Naive thymus-derived CD4-positive, alpha-beta T cell (primary cell): ENCODE measurements at regions of chr1 and their contacts with region 1.

Region 1: GRCh38 chr1:154607609-154608396 is at the start of gene ADAR:
- DNase-seq: peak; percentile 67 to 95 (median 90)
- ATAC-seq: peak; percentile 92
- H3K4me3 ChIP-seq: peak within 1 kb of the TSS; percentile 78
- H3K4me3 Mint-ChIP-seq: peak within 1 kb of the TSS; percentile 91 to 100 (median 98)
- H3K27ac ChIP-seq: peak within 1 kb of the TSS; percentile 97
- H3K27ac Mint-ChIP-seq: peak within 1 kb of the TSS; percentile 94 to 99 (median 99)
- H3K4me1 ChIP-seq: peaks cover 40 to 42% of the 10 kb centered on the region in 2 donors
- H3K4me1 Mint-ChIP-seq: peaks cover 63 to 90% (median 75%) of the 10 kb centered on the region in 7 donors
- H3K27me3 ChIP-seq: no peaks in the 10 kb centered on the region
- H3K27me3 Mint-ChIP-seq: no peaks in the 10 kb centered on the region
- total RNA-seq, gene ADAR: 206 to 408 (median 237) TPM

Region 2: DNA sequence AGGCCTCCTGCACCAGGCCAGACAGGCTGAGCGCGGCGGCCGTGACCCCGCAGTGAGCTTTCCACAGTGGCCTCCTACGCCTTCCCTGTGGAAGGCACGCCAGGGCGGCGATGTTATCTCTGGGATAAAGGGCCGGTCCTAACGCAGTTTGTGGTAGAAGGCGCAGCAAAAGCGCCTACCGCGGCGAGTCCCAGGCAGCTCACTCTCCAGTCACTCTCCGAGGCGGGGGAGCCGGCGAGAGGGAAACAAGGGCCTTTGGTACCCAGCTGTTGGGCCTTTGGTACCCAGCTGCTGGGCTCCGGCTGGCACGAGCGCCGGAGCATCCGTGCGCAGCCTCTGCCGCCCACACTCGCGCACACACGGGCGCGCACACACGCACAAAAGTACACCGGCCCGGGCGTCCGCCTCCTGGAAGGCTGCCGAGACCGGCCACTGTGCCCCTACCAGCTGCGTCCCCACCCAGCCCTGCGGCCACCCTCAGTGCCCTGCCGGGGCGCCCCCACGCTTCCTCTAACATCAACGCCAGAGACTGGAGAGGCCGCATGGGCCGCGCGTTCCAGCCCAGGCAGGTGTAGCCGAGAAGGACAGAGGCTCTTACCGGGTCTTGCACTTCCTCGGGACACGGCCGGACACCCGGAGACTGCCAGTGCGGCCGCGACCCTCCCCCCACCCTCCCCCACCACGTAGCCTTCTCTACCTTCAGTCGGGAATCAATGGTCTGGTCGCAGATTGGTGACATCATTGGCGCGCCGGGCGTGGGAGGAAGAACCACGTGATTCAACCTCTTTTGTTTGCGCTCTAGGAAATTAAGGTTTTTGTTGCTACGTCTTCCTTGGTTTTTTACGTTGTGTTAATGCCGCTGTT is 19.7 kb after region 1 on chr1:
- CTCF ChIA-PET with region 1: interaction called, 6 read pairs
- POLR2A ChIA-PET with region 1: interaction called, 20 read pairs
- intact Hi-C with region 1: loop called (anchors 1 kb)
- DNase-seq: peak; percentile 78 to 92 (median 90)
- ATAC-seq: peak; percentile 81
- H3K4me3 ChIP-seq: peak overlapping the region; percentile 72
- H3K4me3 Mint-ChIP-seq: peak overlapping the region; percentile 85 to 100 (median 94)
- H3K27ac ChIP-seq: peak overlapping the region; percentile 99
- H3K27ac Mint-ChIP-seq: peak overlapping the region; percentile 98 to 100 (median 99)
- H3K4me1 ChIP-seq: peaks cover 15% of the 10 kb centered on the region in 2 donors
- H3K4me1 Mint-ChIP-seq: peaks cover 20 to 54% (median 44%) of the 10 kb centered on the region in 7 donors
- H3K27me3 ChIP-seq: no peaks in the 10 kb centered on the region
- H3K27me3 Mint-ChIP-seq: peaks cover 0 to 20% (median 7%) of the 10 kb centered on the region in 5 donors

Region 3: GRCh38 chr1:154878371-154879022 is 270.7 kb after region 1 on chr1:
- CTCF ChIA-PET with region 1: interaction called, 4 read pairs
- POLR2A ChIA-PET with region 1: no interaction called
- intact Hi-C with region 1: loop called in 1 of 2 experiments (anchors 1 kb)
- DNase-seq: peak; percentile 43 to 73 (median 60)
- ATAC-seq: peak; percentile 94
- H3K4me3 ChIP-seq: no peak overlapping the region
- H3K4me3 Mint-ChIP-seq: no peak overlapping the region
- H3K27ac ChIP-seq: no peak overlapping the region
- H3K27ac Mint-ChIP-seq: peak overlapping the region in 1 of 9 donors; percentile 56
- H3K4me1 ChIP-seq: no peaks in the 10 kb centered on the region
- H3K4me1 Mint-ChIP-seq: peaks cover 0 to 8% (median 0%) of the 10 kb centered on the region in 7 donors
- H3K27me3 ChIP-seq: no peaks in the 10 kb centered on the region
- H3K27me3 Mint-ChIP-seq: peaks cover 0 to 2% (median 0%) of the 10 kb centered on the region in 5 donors

Region 4: GRCh38 chr1:154974063-154974807 is 366.4 kb after region 1 on chr1 and contains the start of gene CKS1B:
- CTCF ChIA-PET with region 1: no interaction called
- POLR2A ChIA-PET with region 1: no interaction called
- intact Hi-C with region 1: loop called in 1 of 2 experiments (anchors 1 kb)
- DNase-seq: peak; percentile 86 to 100 (median 98)
- ATAC-seq: peak; percentile 89
- H3K4me3 ChIP-seq: peak within 1 kb of the TSS; percentile 82
- H3K4me3 Mint-ChIP-seq: no peak within 1 kb of the TSS
- H3K27ac ChIP-seq: peak within 1 kb of the TSS; percentile 94
- H3K27ac Mint-ChIP-seq: no peak within 1 kb of the TSS
- H3K4me1 ChIP-seq: peaks cover 28 to 35% of the 10 kb centered on the region in 2 donors
- H3K4me1 Mint-ChIP-seq: peaks cover 27 to 39% (median 31%) of the 10 kb centered on the region in 7 donors
- H3K27me3 ChIP-seq: no peaks in the 10 kb centered on the region
- H3K27me3 Mint-ChIP-seq: no peaks in the 10 kb centered on the region
- total RNA-seq, gene CKS1B: 8.4 to 105 (median 10.2) TPM

Region 5: GRCh38 chr1:155135415-155136028 is 527.7 kb after region 1 on chr1 and contains the start of gene SLC50A1:
- CTCF ChIA-PET with region 1: no interaction called
- POLR2A ChIA-PET with region 1: no interaction called
- intact Hi-C with region 1: loop called in 1 of 2 experiments (anchors 5 kb)
- DNase-seq: peak; percentile 86 to 96 (median 90)
- ATAC-seq: peak; percentile 93
- H3K4me3 ChIP-seq: peak within 1 kb of the TSS; percentile 99
- H3K4me3 Mint-ChIP-seq: peak within 1 kb of the TSS; percentile 91 to 100 (median 98)
- H3K27ac ChIP-seq: peak within 1 kb of the TSS; percentile 99
- H3K27ac Mint-ChIP-seq: peak within 1 kb of the TSS; percentile 95 to 100 (median 98)
- H3K4me1 ChIP-seq: peaks cover 8 to 15% of the 10 kb centered on the region in 2 donors
- H3K4me1 Mint-ChIP-seq: peaks cover 41 to 58% (median 46%) of the 10 kb centered on the region in 7 donors
- H3K27me3 ChIP-seq: no peaks in the 10 kb centered on the region
- H3K27me3 Mint-ChIP-seq: peaks cover 0 to 2% (median 0%) of the 10 kb centered on the region in 5 donors
- total RNA-seq, gene SLC50A1: 21.1 to 35.6 (median 24.3) TPM